GM10248 (cell line): ENCODE measurements at regions of chr16 and their contacts with region 1.

Region 1: GRCh38 chr16:24010440-24011089 is 174.8 kb downstream of the PRKCB start:
- DNase-seq: peak; percentile 66
- CTCF ChIP-seq: peak; percentile 89

Region 2: DNA sequence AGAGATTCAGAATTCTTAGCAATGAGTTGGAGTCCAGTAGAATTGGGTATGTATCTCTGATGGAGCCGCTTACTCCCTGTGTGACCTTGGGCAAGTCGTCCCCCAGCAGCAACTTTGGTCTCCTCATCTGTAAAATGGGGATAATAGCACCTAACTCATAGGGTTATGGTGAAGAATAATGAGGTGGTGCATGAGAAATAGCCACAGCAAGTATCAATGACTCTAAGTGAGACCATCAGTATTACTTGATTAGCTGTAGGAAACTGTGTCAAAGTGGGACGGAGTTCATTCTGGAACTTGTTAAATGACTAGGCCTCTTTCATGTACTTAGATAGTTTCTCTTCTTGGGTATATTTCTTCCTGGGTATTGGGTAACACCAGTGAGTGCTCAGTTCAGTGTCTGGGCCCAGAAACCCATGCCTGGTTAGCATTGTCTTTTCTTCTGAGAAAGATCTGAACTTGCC is 168.4 kb before region 1 on chr16:
- CTCF ChIA-PET with region 1: interaction called, 17 read pairs
- POLR2A ChIA-PET with region 1: no interaction called
- DNase-seq: peak; percentile 65
- CTCF ChIP-seq: no peak

Region 3: GRCh38 chr16:23952128-23952970 is 58.2 kb before region 1 on chr16:
- CTCF ChIA-PET with region 1: interaction called, 10 read pairs
- POLR2A ChIA-PET with region 1: no interaction called
- DNase-seq: no peak
- CTCF ChIP-seq: no peak

Region 4: DNA sequence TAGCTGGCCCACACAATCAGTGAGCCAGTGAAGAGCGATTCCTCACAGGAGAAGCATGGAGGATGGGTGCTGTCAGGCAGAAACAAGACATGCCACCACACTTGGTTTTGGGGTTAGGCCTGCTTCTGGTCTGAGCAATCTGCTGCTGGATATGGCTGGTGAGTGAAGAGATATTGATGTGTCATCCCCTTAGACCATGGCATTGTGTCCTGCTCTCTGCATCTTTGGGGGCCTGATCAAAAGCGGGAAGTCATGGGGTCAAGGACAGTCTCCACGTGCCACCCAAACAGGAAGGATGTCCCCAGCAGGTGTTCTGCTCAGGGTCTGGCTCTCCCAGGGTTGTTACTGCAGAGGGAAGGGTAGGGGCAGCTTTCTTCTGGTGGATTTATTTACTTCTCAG is 34.0 kb before region 1 on chr16:
- CTCF ChIA-PET with region 1: interaction called, 10 read pairs
- POLR2A ChIA-PET with region 1: no interaction called
- DNase-seq: no peak
- CTCF ChIP-seq: no peak

Region 5: DNA sequence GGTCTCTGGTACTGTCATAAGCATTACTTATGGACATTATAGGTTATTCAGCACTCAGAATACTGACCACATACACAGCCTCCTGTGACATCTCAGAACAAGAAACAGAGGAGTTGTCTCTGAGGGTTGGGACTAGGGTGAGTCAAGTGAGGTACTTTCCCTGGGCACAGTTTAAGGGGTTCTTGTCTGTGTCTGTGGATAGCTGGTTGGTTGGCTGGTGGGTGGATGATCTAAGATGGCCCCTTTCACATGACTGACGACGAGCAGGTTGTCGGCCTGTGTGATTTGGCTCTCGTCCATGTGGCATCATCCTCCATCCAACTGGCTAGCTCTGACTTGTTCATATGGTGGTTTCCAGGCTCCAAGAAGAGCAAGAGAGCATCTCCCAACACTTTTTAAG is 10.9 kb before region 1 on chr16:
- CTCF ChIA-PET with region 1: interaction called, 41 read pairs
- POLR2A ChIA-PET with region 1: interaction called, 6 read pairs
- DNase-seq: peak; percentile 42
- CTCF ChIP-seq: no peak